ENCODE measurements at regions of chr11 and their contacts with region 1.

Region 1: GRCh38 chr11:61406067-61406466 is 13.7 kb downstream of the TMEM216 start:
- DNase-seq: no peak
- ATAC-seq: no peak
- H3K4me3 ChIP-seq: no peak overlapping the region
- H3K27ac ChIP-seq: no peak overlapping the region
- H3K4me1 ChIP-seq: no peaks in the 10 kb centered on the region
- H3K27me3 ChIP-seq: no peaks in the 10 kb centered on the region
- CTCF ChIP-seq: no peak
- POLR2A ChIP-seq: no peak
- RAD21 ChIP-seq: no peak

Region 2: GRCh38 chr11:61315260-61315659 is 90.8 kb before region 1 on chr11:
- CTCF ChIA-PET with region 1: no interaction called
- POLR2A ChIA-PET with region 1: no interaction called
- RAD21 ChIA-PET with region 1: no interaction called
- intact Hi-C with region 1: loop called (anchors 5 kb)
- DNase-seq: no peak
- ATAC-seq: no peak
- H3K4me3 ChIP-seq: no peak overlapping the region
- H3K27ac ChIP-seq: no peak overlapping the region
- H3K4me1 ChIP-seq: no peaks in the 10 kb centered on the region
- H3K27me3 ChIP-seq: no peaks in the 10 kb centered on the region
- CTCF ChIP-seq: no peak
- POLR2A ChIP-seq: no peak
- RAD21 ChIP-seq: no peak